ENCODE measurements at regions of chr7 and their contacts with region 1.

Region 1: DNA sequence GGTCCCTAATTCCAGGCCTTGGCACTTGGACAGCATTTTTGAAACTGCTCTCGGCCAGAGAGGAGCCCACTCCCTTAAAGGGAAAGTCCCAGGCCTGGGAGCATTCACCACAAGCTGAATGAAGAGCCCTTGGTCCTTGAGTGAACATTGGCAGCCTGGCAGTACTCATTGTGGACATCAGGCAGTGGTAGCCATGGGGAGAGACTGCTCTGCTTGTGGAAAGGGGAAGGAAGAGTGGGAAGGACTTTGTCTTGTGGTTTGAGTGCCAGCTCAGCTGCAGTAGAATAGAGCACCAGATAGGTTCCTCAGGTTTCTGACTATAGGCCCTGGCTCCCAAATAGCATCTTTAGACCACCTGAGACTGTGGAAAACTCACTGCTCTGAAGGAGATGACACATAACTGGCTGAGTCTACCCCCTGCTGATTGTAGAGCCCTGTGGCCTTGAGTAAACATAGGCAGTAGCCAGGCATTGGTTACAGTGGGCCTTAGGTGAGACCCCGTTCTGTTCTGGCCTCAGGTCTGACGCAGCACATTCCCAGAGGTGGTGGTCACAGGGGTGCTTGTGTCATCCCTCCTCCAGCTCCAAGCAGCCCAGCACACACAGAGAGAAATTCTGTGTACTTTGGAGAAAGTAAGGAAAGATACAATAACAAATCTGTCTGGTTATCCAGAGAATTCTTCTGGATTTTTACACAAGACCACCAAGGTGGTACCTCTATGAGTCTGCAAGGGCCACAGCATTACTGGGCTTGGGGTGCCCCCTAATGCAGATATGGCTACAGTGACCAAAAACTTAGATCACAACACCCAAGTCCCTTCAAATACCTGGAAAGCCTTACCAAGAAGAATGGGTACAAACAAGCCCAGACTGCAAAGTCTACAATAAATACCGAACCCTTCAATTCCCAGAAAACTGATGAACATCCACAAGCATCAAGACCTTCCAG is 153.8 kb downstream of the GNAI1 start:
- DNase-seq: no peak
- ATAC-seq: no peak
- H3K4me3 ChIP-seq: no peak overlapping the region
- H3K27ac ChIP-seq: no peak overlapping the region
- H3K4me1 ChIP-seq: peaks cover 0 to 8% (median 0%) of the 10 kb centered on the region in 9 donors
- H3K27me3 ChIP-seq: no peaks in the 10 kb centered on the region
- CTCF ChIP-seq: peak in 7 of 9 donors; percentile 18 to 62 (median 37)

Region 2: DNA sequence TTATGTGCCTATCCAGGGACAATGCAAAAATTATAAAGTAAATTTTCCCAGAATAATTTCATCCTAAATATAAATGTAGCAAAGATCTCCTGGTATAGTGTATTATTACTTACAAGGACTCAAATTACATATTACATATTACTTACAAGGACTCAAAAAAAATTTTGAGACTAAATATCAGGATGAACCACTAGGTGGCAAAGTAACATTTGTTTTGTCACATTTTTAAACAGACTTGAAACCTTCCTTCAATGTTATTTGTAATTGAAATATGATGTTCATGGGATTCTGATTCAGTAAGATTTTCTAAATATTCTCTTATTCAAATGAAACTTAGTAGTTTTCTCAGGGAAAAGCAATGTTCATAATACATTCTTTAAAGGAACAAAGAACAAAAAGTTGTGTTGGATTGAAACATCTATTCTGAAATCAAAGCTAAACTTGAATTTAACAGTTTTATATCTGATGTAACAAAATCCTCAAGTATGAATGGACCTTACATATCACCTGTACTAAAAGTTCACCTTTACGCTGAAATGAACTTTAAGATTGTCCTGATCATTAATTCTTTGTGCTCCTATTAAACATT is 228.1 kb before region 1 on chr7:
- intact Hi-C with region 1: loop called in 2 of 10 experiments (anchors 5 to 10 kb)
- DNase-seq: no peak
- ATAC-seq: no peak
- H3K4me3 ChIP-seq: no peak overlapping the region
- H3K27ac ChIP-seq: no peak overlapping the region
- H3K4me1 ChIP-seq: no peaks in the 10 kb centered on the region
- H3K27me3 ChIP-seq: no peaks in the 10 kb centered on the region
- CTCF ChIP-seq: peak in 8 of 9 donors; percentile 32 to 68 (median 57)

Region 3: GRCh38 chr7:80095545-80095944 is 192.9 kb before region 1 on chr7:
- intact Hi-C with region 1: loop called in 3 of 10 experiments (anchors 10 kb)
- DNase-seq: no peak
- ATAC-seq: no peak
- H3K4me3 ChIP-seq: no peak overlapping the region
- H3K27ac ChIP-seq: no peak overlapping the region
- H3K4me1 ChIP-seq: no peaks in the 10 kb centered on the region
- H3K27me3 ChIP-seq: no peaks in the 10 kb centered on the region
- CTCF ChIP-seq: peak; percentile 16 to 66 (median 53)

Region 4: GRCh38 chr7:80346704-80347103 is 58.3 kb after region 1 on chr7:
- intact Hi-C with region 1: no loop called
- DNase-seq: no peak
- ATAC-seq: peak in 4 of 8 donors; percentile 16 to 50 (median 40)
- H3K4me3 ChIP-seq: no peak overlapping the region
- H3K27ac ChIP-seq: peak overlapping the region in 1 of 10 donors; percentile 54
- H3K4me1 ChIP-seq: peaks cover 0 to 23% (median 11%) of the 10 kb centered on the region in 9 donors
- H3K27me3 ChIP-seq: no peaks in the 10 kb centered on the region
- CTCF ChIP-seq: no peak

Region 5: GRCh38 chr7:80563561-80564327 is 275.3 kb after region 1 on chr7:
- intact Hi-C with region 1: no loop called
- DNase-seq: no peak
- ATAC-seq: no peak
- H3K4me3 ChIP-seq: no peak overlapping the region
- H3K27ac ChIP-seq: no peak overlapping the region
- H3K4me1 ChIP-seq: peaks cover 0 to 5% (median 0%) of the 10 kb centered on the region in 9 donors
- H3K27me3 ChIP-seq: no peaks in the 10 kb centered on the region
- CTCF ChIP-seq: no peak